CD14-positive monocyte (primary cell): ENCODE measurements at regions of chr12 and their contacts with region 1.

Region 1: DNA sequence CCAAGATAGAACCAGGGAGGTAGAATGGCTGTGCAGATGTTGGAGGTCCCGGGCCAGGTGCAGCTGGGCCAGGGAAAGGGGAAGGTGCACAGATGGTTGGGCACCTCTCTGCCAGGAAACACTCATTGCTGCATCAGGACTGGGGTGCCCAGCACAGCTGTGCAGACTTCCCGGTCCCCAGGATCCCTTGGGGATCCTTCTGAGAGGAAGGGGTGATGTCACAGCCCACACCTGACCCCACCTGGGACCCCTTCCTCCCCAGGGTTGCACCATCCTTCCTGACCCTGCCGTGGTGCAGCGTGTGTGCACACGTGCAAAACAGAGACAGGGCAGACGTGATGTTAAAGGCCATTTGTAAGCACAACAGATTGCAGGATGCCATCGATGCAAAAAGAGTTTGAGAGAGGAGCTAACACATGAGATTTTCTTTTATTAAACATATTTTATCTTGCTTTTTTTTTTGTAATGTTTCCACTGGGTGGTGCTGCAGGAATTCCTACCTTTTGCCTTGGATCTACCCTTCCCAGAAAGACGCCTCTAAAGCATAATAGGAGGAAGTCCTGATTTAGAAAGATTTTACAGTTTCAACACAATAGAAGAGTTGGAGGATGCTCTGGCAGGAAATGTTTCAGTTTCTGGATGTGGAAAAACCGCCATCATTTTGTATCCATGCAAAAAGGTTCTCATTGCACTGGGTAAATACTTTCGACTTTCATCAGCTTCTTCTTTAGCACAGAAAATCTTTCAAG is 14.8 kb downstream of the ELK3 start:
- DNase-seq: no peak
- H3K4me3 ChIP-seq: no peak overlapping the region
- H3K4me3 Mint-ChIP-seq: peak overlapping the region in 1 of 2 donors; percentile 73
- H3K27ac ChIP-seq: peak overlapping the region in 1 of 2 donors; percentile 50
- H3K27ac Mint-ChIP-seq: peak overlapping the region in 5 of 7 donors; percentile 2 to 77 (median 52)
- H3K4me1 ChIP-seq: peaks cover 37 to 51% of the 10 kb centered on the region in 2 donors
- H3K4me1 Mint-ChIP-seq: peaks cover 75% of the 10 kb centered on the region
- H3K27me3 ChIP-seq: no peaks in the 10 kb centered on the region
- H3K27me3 Mint-ChIP-seq: no peaks in the 10 kb centered on the region
- CTCF ChIP-seq: no peak

Region 2: GRCh38 chr12:96112733-96113132 is 96.2 kb before region 1 on chr12:
- intact Hi-C with region 1: loop called in 1 of 2 experiments (anchors 10 kb)
- DNase-seq: no peak
- H3K4me3 ChIP-seq: no peak overlapping the region
- H3K4me3 Mint-ChIP-seq: no peak overlapping the region
- H3K27ac ChIP-seq: no peak overlapping the region
- H3K27ac Mint-ChIP-seq: no peak overlapping the region
- H3K4me1 ChIP-seq: peaks cover 8 to 22% of the 10 kb centered on the region in 2 donors
- H3K4me1 Mint-ChIP-seq: peaks cover 37% of the 10 kb centered on the region
- H3K27me3 ChIP-seq: no peaks in the 10 kb centered on the region
- H3K27me3 Mint-ChIP-seq: peaks cover 0 to 2% (median 0%) of the 10 kb centered on the region in 3 donors
- CTCF ChIP-seq: no peak

Region 3: DNA sequence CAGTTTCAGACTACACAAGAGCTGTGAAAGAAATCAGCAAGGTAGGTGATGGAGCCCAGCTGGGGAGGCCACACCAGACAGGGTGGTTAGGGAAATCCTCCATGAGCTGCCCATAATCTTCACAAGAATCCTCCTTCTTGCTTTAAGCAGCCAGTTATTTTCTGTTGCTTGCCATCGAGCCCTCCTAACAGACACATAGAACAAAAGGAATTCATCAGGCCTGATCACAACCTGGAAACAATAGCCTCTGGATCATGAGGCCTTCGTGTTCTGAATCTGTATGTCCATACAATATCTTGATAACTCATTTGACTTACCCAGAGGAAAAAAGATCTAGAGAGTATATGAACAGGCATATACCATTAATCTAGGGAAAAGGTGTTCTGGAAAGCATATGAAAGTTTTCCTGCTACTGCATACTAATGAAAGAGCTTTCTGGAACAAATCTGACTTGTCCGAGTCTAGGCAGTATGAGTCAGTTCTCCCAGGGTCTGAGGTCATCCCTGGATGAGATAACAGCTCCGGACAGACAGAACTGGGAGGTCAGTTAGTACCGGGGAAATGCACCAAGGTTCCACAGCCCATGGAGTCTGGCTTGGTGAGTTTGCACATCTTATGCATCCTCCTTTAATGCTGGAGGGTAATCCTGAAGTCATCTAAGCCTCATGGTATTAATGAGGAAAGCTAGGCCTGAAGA is 67.6 kb before region 1 on chr12:
- intact Hi-C with region 1: no loop called
- DNase-seq: no peak
- H3K4me3 ChIP-seq: no peak overlapping the region
- H3K4me3 Mint-ChIP-seq: no peak overlapping the region
- H3K27ac ChIP-seq: no peak overlapping the region
- H3K27ac Mint-ChIP-seq: no peak overlapping the region
- H3K4me1 ChIP-seq: peaks cover 31 to 36% of the 10 kb centered on the region in 2 donors
- H3K4me1 Mint-ChIP-seq: peaks cover 36% of the 10 kb centered on the region
- H3K27me3 ChIP-seq: no peaks in the 10 kb centered on the region
- H3K27me3 Mint-ChIP-seq: peaks cover 0 to 4% (median 2%) of the 10 kb centered on the region in 3 donors
- CTCF ChIP-seq: no peak

Region 4: DNA sequence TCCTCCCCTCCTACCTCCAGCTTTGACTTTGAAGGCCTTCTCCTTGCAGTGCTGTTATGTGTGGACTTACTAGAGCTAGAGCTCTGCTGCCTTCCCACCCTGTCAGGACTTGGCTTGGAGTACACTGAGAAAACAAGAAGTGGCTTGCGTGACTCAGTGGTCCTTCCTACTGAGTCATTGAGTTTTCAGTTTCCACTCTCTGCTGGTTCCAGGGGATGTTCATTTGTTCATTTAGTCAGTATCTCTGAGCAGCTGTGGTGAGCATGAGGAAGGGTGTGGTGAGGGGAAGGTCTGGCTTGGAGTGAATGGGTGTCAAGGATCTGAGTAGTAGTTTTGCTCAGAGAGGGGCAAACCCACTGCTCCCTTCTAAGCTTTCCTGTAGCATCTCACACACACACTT is 32.0 kb before region 1 on chr12:
- intact Hi-C with region 1: loop called in 1 of 2 experiments (anchors 5 kb)
- DNase-seq: peak; percentile 93 to 98 (median 96)
- H3K4me3 ChIP-seq: no peak overlapping the region
- H3K4me3 Mint-ChIP-seq: peak overlapping the region in 1 of 2 donors; percentile 30
- H3K27ac ChIP-seq: peak overlapping the region; percentile 55 to 83
- H3K27ac Mint-ChIP-seq: peak overlapping the region; percentile 80 to 95 (median 93)
- H3K4me1 ChIP-seq: peaks cover 22 to 32% of the 10 kb centered on the region in 2 donors
- H3K4me1 Mint-ChIP-seq: peaks cover 36% of the 10 kb centered on the region
- H3K27me3 ChIP-seq: no peaks in the 10 kb centered on the region
- H3K27me3 Mint-ChIP-seq: peaks cover 0 to 5% (median 2%) of the 10 kb centered on the region in 3 donors
- CTCF ChIP-seq: no peak